Aorta (tissue), 5 donors: ENCODE measurements at regions of chr22 and their contacts with region 1.

Region 1: GRCh38 chr22:17158568-17159503 is at the start of gene HDHD5:
- DNase-seq: peak; percentile 94 to 96
- ATAC-seq: peak; percentile 95
- H3K4me3 ChIP-seq: peak within 1 kb of the TSS; percentile 48 to 77
- H3K27ac ChIP-seq: peak within 1 kb of the TSS; percentile 16 to 46
- H3K4me1 ChIP-seq: no peaks in the 10 kb centered on the region
- H3K27me3 ChIP-seq: no peaks in the 10 kb centered on the region
- total RNA-seq, gene HDHD5: 15.1 to 19.2 TPM

Region 2: GRCh38 chr22:17084554-17085276 is 74.1 kb before region 1 on chr22 and contains the start of gene IL17RA:
- intact Hi-C with region 1: loop called in 1 of 2 experiments (anchors 2 kb)
- DNase-seq: peak; percentile 95 to 96
- ATAC-seq: peak; percentile 97
- H3K4me3 ChIP-seq: peak within 1 kb of the TSS; percentile 71 to 95
- H3K27ac ChIP-seq: peak within 1 kb of the TSS in 1 of 2 donors; percentile 35
- H3K4me1 ChIP-seq: peaks cover 0 to 4% of the 10 kb centered on the region in 2 donors
- H3K27me3 ChIP-seq: no peaks in the 10 kb centered on the region
- total RNA-seq, gene IL17RA: 19.9 to 28.3 TPM

Region 3: GRCh38 chr22:17106785-17107546 is 51.9 kb before region 1 on chr22:
- intact Hi-C with region 1: no loop called
- DNase-seq: peak in 1 of 2 donors; percentile 75
- ATAC-seq: no peak
- H3K4me3 ChIP-seq: no peak overlapping the region
- H3K27ac ChIP-seq: no peak overlapping the region
- H3K4me1 ChIP-seq: no peaks in the 10 kb centered on the region
- H3K27me3 ChIP-seq: no peaks in the 10 kb centered on the region

Region 4: GRCh38 chr22:17140826-17141766 is 17.7 kb before region 1 on chr22:
- intact Hi-C with region 1: no loop called
- DNase-seq: peak in 1 of 2 donors; percentile 70
- ATAC-seq: no peak
- H3K4me3 ChIP-seq: no peak overlapping the region
- H3K27ac ChIP-seq: no peak overlapping the region
- H3K4me1 ChIP-seq: no peaks in the 10 kb centered on the region
- H3K27me3 ChIP-seq: no peaks in the 10 kb centered on the region